ENCODE measurements at regions of chr1 and their contacts with region 1.

Region 1: DNA sequence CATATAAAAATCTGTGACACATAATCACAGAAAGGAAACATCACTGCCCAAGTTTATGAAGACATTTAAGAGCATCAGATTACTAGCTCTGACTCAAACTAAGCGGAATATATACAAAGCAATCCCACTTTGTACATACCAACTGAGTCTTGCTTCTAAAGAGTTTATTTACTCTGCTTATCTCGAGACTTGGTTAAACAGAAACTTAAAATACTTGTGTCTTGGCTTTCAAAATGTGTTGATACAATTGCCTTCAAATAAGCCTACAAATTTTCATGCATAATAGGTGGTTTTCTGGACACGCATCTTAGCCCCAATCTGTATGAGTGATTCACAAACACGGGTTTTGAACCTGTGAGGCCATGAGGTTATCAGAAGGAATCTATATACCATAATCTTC is 21.0 kb downstream of the CD160 start:
- DNase-seq: no peak
- ATAC-seq: no peak
- H3K4me3 Mint-ChIP-seq: no peak overlapping the region
- H3K27ac Mint-ChIP-seq: no peak overlapping the region
- H3K4me1 Mint-ChIP-seq: no peaks in the 10 kb centered on the region
- H3K27me3 Mint-ChIP-seq: no peaks in the 10 kb centered on the region

Region 2: GRCh38 chr1:145545055-145545454 is 195.2 kb before region 1 on chr1:
- CTCF ChIA-PET with region 1: no interaction called
- POLR2A ChIA-PET with region 1: no interaction called
- intact Hi-C with region 1: no loop called
- DNase-seq: no peak
- ATAC-seq: no peak
- H3K4me3 Mint-ChIP-seq: no peak overlapping the region
- H3K27ac Mint-ChIP-seq: no peak overlapping the region
- H3K4me1 Mint-ChIP-seq: no peaks in the 10 kb centered on the region
- H3K27me3 Mint-ChIP-seq: peaks cover 15% of the 10 kb centered on the region

Region 3: GRCh38 chr1:145823565-145824498 is 83.6 kb after region 1 on chr1 and contains the starts of genes POLR3C and RNF115:
- CTCF ChIA-PET with region 1: no interaction called
- POLR2A ChIA-PET with region 1: no interaction called
- intact Hi-C with region 1: loop called in 1 of 2 experiments (anchors 10 kb)
- DNase-seq: peak; percentile 91
- ATAC-seq: peak; percentile 67
- H3K4me3 Mint-ChIP-seq: peak within 1 kb of the TSS; percentile 97
- H3K27ac Mint-ChIP-seq: peak within 1 kb of the TSS; percentile 98
- H3K4me1 Mint-ChIP-seq: peaks cover 44% of the 10 kb centered on the region
- H3K27me3 Mint-ChIP-seq: no peaks in the 10 kb centered on the region
- total RNA-seq, gene POLR3C: 34.2 to 42.6 TPM
- total RNA-seq, gene RNF115: 11.8 to 13.9 TPM